GM10248 (cell line): ENCODE measurements at regions of chr4 and their contacts with region 1.

Region 1: GRCh38 chr4:82798168-82799005 is at the start of gene SCD5:
- DNase-seq: peak; percentile 85
- CTCF ChIP-seq: no peak

Region 2: GRCh38 chr4:82811838-82812341 is 13.5 kb after region 1 on chr4:
- CTCF ChIA-PET with region 1: no interaction called
- POLR2A ChIA-PET with region 1: no interaction called
- DNase-seq: no peak
- CTCF ChIP-seq: no peak

Region 3: DNA sequence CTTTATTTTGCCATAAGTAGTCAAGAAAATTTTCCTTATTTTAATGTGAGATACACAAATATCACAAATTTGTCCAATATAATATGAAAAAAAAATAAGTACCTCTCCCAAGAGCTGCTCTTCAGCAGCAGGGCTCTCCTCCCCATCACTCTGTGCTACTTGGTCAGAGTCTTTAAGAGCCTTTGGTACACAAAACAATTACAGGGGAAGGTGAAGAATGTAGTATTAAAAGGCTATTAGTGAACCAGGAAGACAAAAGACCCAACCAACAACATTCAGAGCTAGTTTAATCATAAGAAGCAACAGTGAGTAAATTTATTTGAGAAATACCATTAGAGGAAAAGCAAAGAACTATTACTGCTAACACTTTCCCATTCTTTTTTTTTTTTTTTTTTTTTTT is 63.1 kb after region 1 on chr4:
- CTCF ChIA-PET with region 1: no interaction called
- POLR2A ChIA-PET with region 1: interaction called, 10 read pairs
- DNase-seq: no peak
- CTCF ChIP-seq: no peak